ENCODE measurements at regions of chr2 and their contacts with region 1.

Region 1: DNA sequence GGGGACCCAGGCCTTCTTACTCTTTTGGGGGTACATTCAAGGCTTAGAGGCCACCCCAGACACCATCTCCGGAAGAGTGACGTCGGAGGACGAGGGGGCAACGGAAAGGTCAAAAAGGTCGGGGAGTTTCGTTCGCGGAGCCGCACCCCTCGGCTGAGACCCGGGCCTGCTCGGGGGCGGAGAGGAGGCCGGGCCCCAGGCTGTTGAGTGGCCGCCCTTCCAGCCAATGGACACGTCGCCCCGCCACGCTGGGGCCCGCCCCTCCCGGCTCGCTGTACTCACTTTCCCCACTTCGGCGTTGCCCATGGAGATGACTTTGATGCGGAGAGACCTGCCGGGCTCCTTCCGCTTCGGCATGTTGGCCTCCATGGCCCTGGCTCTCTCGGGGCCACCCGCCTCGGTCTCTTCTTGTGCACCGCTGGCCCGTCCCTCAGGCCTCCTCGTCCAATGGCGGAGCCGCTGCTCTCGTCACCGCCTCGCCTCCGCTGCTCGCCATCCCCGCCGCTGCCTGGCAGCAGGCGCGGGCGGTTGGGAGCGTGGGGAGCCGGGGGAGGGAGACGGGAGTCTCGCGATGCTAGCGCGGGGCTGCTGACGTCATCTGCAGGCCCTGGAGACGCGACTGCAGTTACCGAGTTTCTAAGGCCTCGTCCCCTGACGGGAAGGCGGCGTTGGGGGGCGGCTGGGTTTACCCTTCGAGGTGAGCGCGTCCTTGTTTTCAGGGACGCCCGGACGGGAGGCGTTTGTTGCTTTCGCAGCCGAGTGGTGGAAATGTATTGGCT is at the start of gene DNAJC27:
- DNase-seq: peak; percentile 98
- ATAC-seq: peak; percentile 93
- H3K4me3 Mint-ChIP-seq: peak within 1 kb of the TSS; percentile 97
- H3K27ac Mint-ChIP-seq: peak within 1 kb of the TSS; percentile 99
- H3K4me1 Mint-ChIP-seq: peaks cover 8% of the 10 kb centered on the region; the same call in 1 of the 2 replicates
- H3K27me3 Mint-ChIP-seq: no peaks in the 10 kb centered on the region
- CTCF ChIP-seq: no peak
- total RNA-seq, gene DNAJC27: 3.8 to 5.4 TPM (median 5.0 TPM) in 3 replicates

Region 2: DNA sequence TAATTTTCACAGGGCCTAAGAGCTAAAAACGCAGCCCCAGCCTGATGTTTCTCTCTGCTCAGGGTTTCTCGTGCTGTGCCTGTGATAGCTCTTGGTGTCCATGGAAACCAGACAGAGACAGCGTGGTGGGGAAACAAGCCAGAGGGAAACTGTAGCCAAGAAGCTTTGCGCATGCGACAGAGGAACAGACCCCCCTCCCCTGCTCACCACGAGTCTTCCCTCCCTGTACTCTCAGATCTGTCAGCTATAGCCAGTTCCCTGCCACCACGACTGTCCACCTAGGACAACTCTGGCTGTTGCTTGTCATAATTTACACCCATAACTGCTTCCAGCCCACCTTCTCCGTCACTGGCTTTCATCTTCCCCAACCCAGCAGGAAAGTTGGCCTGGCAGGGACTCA is 13.2 kb after region 1 on chr2:
- CTCF ChIA-PET with region 1: interaction called, 15 read pairs
- POLR2A ChIA-PET with region 1: interaction called, 3 read pairs
- DNase-seq: no peak
- ATAC-seq: peak; percentile 52; the same call in 1 of the 2 replicates
- H3K4me3 Mint-ChIP-seq: no peak overlapping the region
- H3K27ac Mint-ChIP-seq: no peak overlapping the region
- H3K4me1 Mint-ChIP-seq: no peaks in the 10 kb centered on the region; the same call in 1 of the 2 replicates
- H3K27me3 Mint-ChIP-seq: no peaks in the 10 kb centered on the region; the same call in 1 of the 2 replicates
- CTCF ChIP-seq: no peak

Region 3: GRCh38 chr2:24993406-24994145 is 21.9 kb after region 1 on chr2:
- CTCF ChIA-PET with region 1: interaction called, 11 read pairs
- POLR2A ChIA-PET with region 1: no interaction called
- DNase-seq: no peak
- ATAC-seq: no peak
- H3K4me3 Mint-ChIP-seq: no peak overlapping the region
- H3K27ac Mint-ChIP-seq: no peak overlapping the region
- H3K4me1 Mint-ChIP-seq: no peaks in the 10 kb centered on the region
- H3K27me3 Mint-ChIP-seq: no peaks in the 10 kb centered on the region; the same call in 1 of the 2 replicates
- CTCF ChIP-seq: no peak

Region 4: DNA sequence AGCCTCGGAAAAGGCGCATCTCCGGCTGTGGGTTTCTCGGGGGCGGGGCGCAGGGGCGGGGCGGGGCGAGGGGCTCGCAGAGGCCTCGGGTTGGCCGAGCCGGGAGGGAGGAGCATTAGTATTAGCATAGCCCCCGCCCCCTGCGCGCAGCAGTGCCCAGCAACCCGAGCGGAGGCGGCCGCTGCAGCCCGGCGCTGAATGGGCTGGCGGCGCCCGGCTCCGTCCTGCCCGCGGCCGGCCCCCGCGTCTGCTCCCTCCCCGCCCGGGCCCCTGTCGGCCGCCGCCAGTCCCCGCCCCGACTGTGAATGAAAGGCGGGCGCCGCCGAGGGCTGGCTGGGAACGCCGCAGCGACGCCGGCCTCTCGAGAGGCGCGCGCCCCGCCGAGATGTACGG is 70.2 kb after region 1 on chr2 and contains the start of gene EFR3B:
- CTCF ChIA-PET with region 1: interaction called, 20 read pairs
- POLR2A ChIA-PET with region 1: no interaction called
- DNase-seq: peak; percentile 96
- ATAC-seq: peak; percentile 94
- H3K4me3 Mint-ChIP-seq: peak within 1 kb of the TSS; percentile 86
- H3K27ac Mint-ChIP-seq: peak within 1 kb of the TSS; percentile 91
- H3K4me1 Mint-ChIP-seq: peaks cover 32% of the 10 kb centered on the region
- H3K27me3 Mint-ChIP-seq: peaks cover 44% of the 10 kb centered on the region
- CTCF ChIP-seq: no peak
- total RNA-seq, gene EFR3B: 8.9 to 10.1 TPM (median 9.7 TPM) in 3 replicates

Region 5: GRCh38 chr2:25197336-25198208 is 225.8 kb after region 1 on chr2:
- CTCF ChIA-PET with region 1: interaction called, 11 read pairs
- POLR2A ChIA-PET with region 1: no interaction called
- DNase-seq: no peak
- ATAC-seq: peak; percentile 18
- H3K4me3 Mint-ChIP-seq: no peak overlapping the region
- H3K27ac Mint-ChIP-seq: no peak overlapping the region
- H3K4me1 Mint-ChIP-seq: peaks cover 8% of the 10 kb centered on the region
- H3K27me3 Mint-ChIP-seq: no peaks in the 10 kb centered on the region; the same call in 1 of the 2 replicates
- CTCF ChIP-seq: no peak

Region 6: DNA sequence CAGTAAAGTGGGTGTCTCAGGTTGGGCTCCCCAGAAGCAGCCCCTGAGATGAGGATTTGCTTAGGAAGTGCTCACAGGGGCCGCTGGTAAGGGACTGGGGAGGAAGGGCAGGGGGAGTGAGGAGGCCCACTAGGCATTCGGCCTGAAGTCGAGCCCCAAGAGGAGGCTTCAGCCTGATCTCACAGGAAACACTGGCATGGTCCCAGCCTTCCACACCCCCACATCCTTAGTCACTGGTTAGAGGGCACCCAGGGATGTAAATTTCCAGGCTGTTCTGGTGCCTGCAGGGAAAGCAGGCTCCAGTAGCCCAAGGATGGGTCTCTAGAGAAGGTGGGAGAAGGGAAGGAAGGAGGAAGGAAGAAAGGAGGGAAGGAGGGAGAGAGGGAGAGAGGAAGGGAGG is 1698.4 kb after region 1 on chr2:
- CTCF ChIA-PET with region 1: no interaction called
- POLR2A ChIA-PET with region 1: no interaction called
- DNase-seq: no peak
- ATAC-seq: no peak
- H3K4me3 Mint-ChIP-seq: no peak overlapping the region
- H3K27ac Mint-ChIP-seq: no peak overlapping the region
- H3K4me1 Mint-ChIP-seq: 0 out of 2 replicates have a peak, but pooled peaks cover 4% of the 10 kb centered on the region
- H3K27me3 Mint-ChIP-seq: no peaks in the 10 kb centered on the region; the same call in 1 of the 2 replicates
- CTCF ChIP-seq: no peak